ENCODE measurements at regions of chr22 and their contacts with region 1.

Region 1: GRCh38 chr22:49670456-49671330 is 157.0 kb downstream of the BRD1 start:
- DNase-seq: peak in 2 of 5 donors; percentile 3 to 40
- H3K4me3 ChIP-seq: peak overlapping the region; percentile 26
- H3K4me3 Mint-ChIP-seq: peak overlapping the region; percentile 53 to 86 (median 79)
- H3K27ac ChIP-seq: no peak overlapping the region
- H3K27ac Mint-ChIP-seq: peak overlapping the region in 4 of 8 donors; percentile 12 to 60 (median 50)
- H3K4me1 ChIP-seq: peaks cover 18% of the 10 kb centered on the region
- H3K4me1 Mint-ChIP-seq: peaks cover 18 to 38% (median 25%) of the 10 kb centered on the region in 3 donors
- H3K27me3 ChIP-seq: peaks cover 11% of the 10 kb centered on the region
- H3K27me3 Mint-ChIP-seq: peaks cover 28 to 44% of the 10 kb centered on the region in 2 donors

Region 2: GRCh38 chr22:49701380-49702067 is 30.8 kb after region 1 on chr22:
- CTCF ChIA-PET with region 1: no interaction called
- POLR2A ChIA-PET with region 1: interaction called, 13 read pairs
- DNase-seq: peak in 1 of 5 donors; percentile 28
- H3K4me3 ChIP-seq: no peak overlapping the region
- H3K4me3 Mint-ChIP-seq: no peak overlapping the region
- H3K27ac ChIP-seq: no peak overlapping the region
- H3K27ac Mint-ChIP-seq: no peak overlapping the region
- H3K4me1 ChIP-seq: peaks cover 6% of the 10 kb centered on the region
- H3K4me1 Mint-ChIP-seq: no peaks in the 10 kb centered on the region
- H3K27me3 ChIP-seq: peaks cover 3% of the 10 kb centered on the region
- H3K27me3 Mint-ChIP-seq: peaks cover 20 to 37% of the 10 kb centered on the region in 2 donors